GM12878 (cell line): ENCODE measurements at regions of chr2 and their contacts with region 1.

Region 1: DNA sequence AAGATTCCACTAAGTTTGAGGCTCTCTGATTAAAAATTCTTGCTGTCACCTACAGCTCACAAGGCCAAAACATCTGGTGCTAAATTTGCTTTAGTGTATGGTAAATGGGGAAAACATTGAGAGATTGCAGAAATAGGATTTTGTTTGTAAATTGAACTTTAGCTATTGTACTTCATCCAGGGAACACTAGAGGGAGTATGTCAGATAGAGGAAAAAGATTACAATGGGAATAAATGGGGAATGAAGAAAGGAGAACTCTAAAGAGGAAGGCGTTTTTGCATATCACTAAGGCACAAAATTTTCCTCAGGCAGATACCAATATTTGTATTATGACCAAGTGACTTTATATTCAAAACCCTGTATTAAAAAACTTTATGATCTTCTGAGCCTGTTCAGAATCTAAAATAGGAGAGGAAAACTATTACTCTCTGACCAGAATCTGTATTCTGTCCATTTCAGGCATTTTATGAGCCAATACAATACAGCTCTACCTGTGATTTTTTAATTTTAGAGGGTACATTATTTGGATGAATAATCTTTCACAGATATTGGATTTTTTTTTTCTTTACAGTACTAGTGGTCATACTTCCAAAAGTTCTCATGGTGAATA is 52.3 kb upstream of the ITGB6 start:
- DNase-seq: no peak
- ATAC-seq: no peak
- H3K4me3 ChIP-seq: no peak overlapping the region
- H3K27ac ChIP-seq: no peak overlapping the region
- H3K4me1 ChIP-seq: no peaks in the 10 kb centered on the region
- H3K27me3 ChIP-seq: no peaks in the 10 kb centered on the region; a peak in 3 of 4 replicates
- CTCF ChIP-seq: peak; percentile 55 to 64 (median 63)
- EP300 ChIP-seq: no peak
- POLR2A ChIP-seq: no peak
- RAD21 ChIP-seq: peak; percentile 44

Region 2: GRCh38 chr2:160229592-160229991 is 22.8 kb before region 1 on chr2:
- CTCF ChIA-PET with region 1: interaction called, 11 read pairs
- POLR2A ChIA-PET with region 1: no interaction called
- RAD21 ChIA-PET with region 1: interaction called, 4 read pairs
- SMC1A ChIA-PET with region 1: interaction called, 5 read pairs
- in situ Hi-C with region 1: no loop called
- intact Hi-C with region 1: no loop called
- DNase-seq: no peak
- ATAC-seq: no peak
- H3K4me3 ChIP-seq: no peak overlapping the region
- H3K27ac ChIP-seq: no peak overlapping the region
- H3K4me1 ChIP-seq: no peaks in the 10 kb centered on the region
- H3K27me3 ChIP-seq: no peaks in the 10 kb centered on the region; a peak in 1 of 4 replicates
- CTCF ChIP-seq: no peak
- EP300 ChIP-seq: no peak
- POLR2A ChIP-seq: no peak
- RAD21 ChIP-seq: no peak

Region 3: DNA sequence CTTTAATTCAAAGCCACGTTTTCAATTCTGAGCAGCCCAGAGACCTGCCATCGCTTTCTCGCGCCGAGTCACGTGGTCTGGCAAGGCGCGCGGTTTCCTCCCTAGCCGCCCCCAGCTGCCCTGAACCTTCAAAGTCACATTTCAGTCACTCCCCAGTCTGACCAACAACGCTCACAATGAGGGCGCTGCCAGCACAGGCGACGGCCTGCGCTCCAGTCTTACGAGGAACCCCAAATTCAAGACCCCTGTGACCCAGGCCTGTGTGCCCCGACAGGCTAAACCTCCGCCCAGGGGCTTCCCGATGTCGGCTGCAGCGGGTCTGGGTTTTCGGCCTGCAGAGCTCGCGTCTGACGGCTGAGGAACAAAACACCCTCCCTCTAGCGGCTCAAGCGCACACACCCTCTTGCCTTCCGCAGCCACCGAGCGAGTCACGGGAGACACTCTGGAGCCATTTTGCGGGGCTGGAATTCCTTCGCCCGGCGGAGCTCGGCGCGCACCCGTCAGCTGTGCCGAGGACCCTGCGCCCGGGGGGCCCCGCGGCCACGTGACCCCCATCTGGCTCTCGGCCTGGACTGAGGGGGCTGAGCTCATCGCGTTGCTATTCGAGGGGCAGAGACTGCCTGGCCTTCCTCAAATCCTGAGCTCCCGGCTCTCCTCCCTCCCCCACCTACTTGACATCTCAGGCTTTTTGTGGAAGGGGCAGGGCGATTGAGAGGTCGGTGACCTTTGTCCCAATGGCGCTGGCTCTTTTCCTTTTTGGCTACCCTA is 17.6 kb after region 1 on chr2:
- CTCF ChIA-PET with region 1: interaction called, 11 read pairs
- POLR2A ChIA-PET with region 1: no interaction called
- RAD21 ChIA-PET with region 1: no interaction called
- SMC1A ChIA-PET with region 1: interaction called, 7 read pairs
- in situ Hi-C with region 1: no loop called
- intact Hi-C with region 1: no loop called
- DNase-seq: peak; percentile 11
- ATAC-seq: peak; percentile 81
- H3K4me3 ChIP-seq: peak overlapping the region; percentile 40; the same call in 1 of the 2 replicates
- H3K27ac ChIP-seq: no peak overlapping the region
- H3K4me1 ChIP-seq: peaks cover 3% of the 10 kb centered on the region
- H3K27me3 ChIP-seq: peaks cover 2 to 5% of the 10 kb centered on the region in 2 experiments; a peak in 2 of 4 replicates
- CTCF ChIP-seq: peak; percentile 55 to 70 (median 56)
- EP300 ChIP-seq: no peak
- POLR2A ChIP-seq: no peak
- RAD21 ChIP-seq: 0 out of 2 replicates have a peak, but pooled peaks have one; percentile 11